IMR-90 (cell line): ENCODE measurements at regions of chr19 and their contacts with region 1.

Region 1: GRCh38 chr19:17859533-17860330 is at the start of gene RPL18A:
- DNase-seq: peak; percentile 100
- ATAC-seq: peak; percentile 93
- H3K4me3 ChIP-seq: peak within 1 kb of the TSS; percentile 71
- H3K27ac ChIP-seq: peak within 1 kb of the TSS; percentile 36
- H3K4me1 ChIP-seq: peaks cover 7% of the 10 kb centered on the region
- H3K27me3 ChIP-seq: no peaks in the 10 kb centered on the region
- CTCF ChIP-seq: peak; percentile 95
- POLR2A ChIP-seq: peak; percentile 98
- RAD21 ChIP-seq: peak; percentile 60
- total RNA-seq, gene RPL18A: 1,241 and 1,351 TPM in 2 replicates

Region 2: DNA sequence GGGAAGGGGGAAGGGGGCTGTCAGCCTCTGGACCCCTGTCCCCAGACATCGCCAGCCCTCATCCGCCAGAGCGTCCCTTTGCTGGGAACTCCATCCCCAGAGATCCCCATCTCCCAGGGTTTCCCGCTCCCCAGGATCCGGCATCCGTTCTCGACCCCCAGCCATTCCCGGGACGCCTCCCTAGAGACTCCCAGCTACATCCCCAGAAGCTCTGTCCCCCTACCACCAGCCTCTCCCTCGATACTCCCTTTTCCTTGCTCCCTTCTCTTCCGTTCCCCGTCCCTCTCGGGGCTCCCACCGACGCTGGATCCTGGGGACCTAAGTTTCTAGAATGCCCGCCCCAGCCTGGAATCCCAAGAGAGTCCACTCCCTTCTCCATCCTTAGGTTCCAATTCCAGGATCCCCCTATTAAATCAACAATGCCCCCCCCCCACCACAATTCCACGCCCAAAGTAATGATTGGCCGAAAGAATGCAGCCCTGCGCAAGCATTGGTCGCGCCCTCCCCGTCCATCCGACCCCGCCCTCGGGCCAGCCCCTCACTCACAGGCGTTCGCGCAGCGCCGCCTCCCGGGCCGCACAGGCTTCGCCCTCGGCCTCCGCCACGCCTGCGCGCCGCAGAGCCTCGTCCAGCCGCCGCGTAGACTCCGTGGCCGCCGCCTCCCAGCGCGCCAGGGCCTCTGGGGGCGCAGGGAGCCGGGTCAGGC is 468.9 kb before region 1 on chr19:
- CTCF ChIA-PET with region 1: no interaction called
- POLR2A ChIA-PET with region 1: no interaction called
- dilution Hi-C with region 1: no loop called
- in situ Hi-C with region 1: no loop called
- intact Hi-C with region 1: loop called (anchors 5 kb)
- DNase-seq: peak; percentile 87
- ATAC-seq: peak; percentile 100
- H3K4me3 ChIP-seq: peak overlapping the region; percentile 51
- H3K27ac ChIP-seq: no peak overlapping the region
- H3K4me1 ChIP-seq: peaks cover 2% of the 10 kb centered on the region; the same call in 1 of the 2 replicates
- H3K27me3 ChIP-seq: peaks cover 3% of the 10 kb centered on the region
- CTCF ChIP-seq: peak; percentile 87
- POLR2A ChIP-seq: no peak
- RAD21 ChIP-seq: peak; percentile 61

Region 3: GRCh38 chr19:17703824-17704463 is 155.8 kb before region 1 on chr19:
- CTCF ChIA-PET with region 1: no interaction called
- POLR2A ChIA-PET with region 1: no interaction called
- dilution Hi-C with region 1: no loop called
- in situ Hi-C with region 1: loop called (anchors 10 kb)
- intact Hi-C with region 1: loop called (anchors 5 kb)
- DNase-seq: peak; percentile 31
- ATAC-seq: peak; percentile 67
- H3K4me3 ChIP-seq: no peak overlapping the region
- H3K27ac ChIP-seq: no peak overlapping the region
- H3K4me1 ChIP-seq: no peaks in the 10 kb centered on the region
- H3K27me3 ChIP-seq: peaks cover 5% of the 10 kb centered on the region; the same call in 1 of the 2 replicates
- CTCF ChIP-seq: peak; percentile 54
- POLR2A ChIP-seq: no peak
- RAD21 ChIP-seq: peak; percentile 45; the same call in 1 of the 2 replicates

Region 4: GRCh38 chr19:17932485-17933338 is 73.0 kb after region 1 on chr19 and contains the start of gene CCDC124:
- CTCF ChIA-PET with region 1: interaction called, 15 read pairs
- POLR2A ChIA-PET with region 1: interaction called, 12 read pairs
- dilution Hi-C with region 1: no loop called
- in situ Hi-C with region 1: no loop called
- intact Hi-C with region 1: loop called (anchors 1 kb)
- DNase-seq: peak; percentile 89
- ATAC-seq: peak; percentile 99
- H3K4me3 ChIP-seq: peak within 1 kb of the TSS; percentile 70
- H3K27ac ChIP-seq: peak within 1 kb of the TSS; percentile 87
- H3K4me1 ChIP-seq: peaks cover 3% of the 10 kb centered on the region; the same call in 1 of the 2 replicates
- H3K27me3 ChIP-seq: peaks cover 2% of the 10 kb centered on the region; the same call in 1 of the 2 replicates
- CTCF ChIP-seq: peak; percentile 99
- POLR2A ChIP-seq: peak; percentile 35; the same call in 1 of the 2 replicates
- RAD21 ChIP-seq: peak; percentile 94
- total RNA-seq, gene CCDC124: 29.4 and 30.1 TPM in 2 replicates

Region 5: DNA sequence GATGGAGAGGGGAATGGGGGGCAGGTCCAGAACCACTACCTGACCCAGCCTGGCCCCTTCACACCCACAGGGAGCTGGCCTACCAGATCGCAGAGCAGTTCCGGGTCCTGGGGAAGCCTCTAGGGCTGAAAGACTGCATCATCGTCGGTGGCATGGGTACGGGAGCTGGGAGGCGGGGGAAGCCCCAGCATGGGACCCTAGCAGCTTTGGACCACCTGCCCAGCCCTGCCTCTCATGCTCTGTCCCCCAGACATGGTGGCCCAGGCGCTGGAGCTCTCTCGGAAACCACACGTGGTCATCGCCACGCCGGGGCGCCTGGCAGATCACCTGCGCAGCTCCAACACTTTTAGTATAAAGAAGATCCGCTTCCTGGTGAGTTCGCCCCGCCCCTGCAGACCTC is 1061.9 kb after region 1 on chr19:
- CTCF ChIA-PET with region 1: no interaction called
- POLR2A ChIA-PET with region 1: no interaction called
- dilution Hi-C with region 1: no loop called
- in situ Hi-C with region 1: no loop called
- intact Hi-C with region 1: no loop called
- DNase-seq: no peak
- ATAC-seq: no peak
- H3K4me3 ChIP-seq: no peak overlapping the region
- H3K27ac ChIP-seq: no peak overlapping the region
- H3K4me1 ChIP-seq: peaks cover 5% of the 10 kb centered on the region
- H3K27me3 ChIP-seq: no peaks in the 10 kb centered on the region
- CTCF ChIP-seq: no peak
- POLR2A ChIP-seq: no peak
- RAD21 ChIP-seq: no peak